Posterior vena cava (tissue), 2 donors: ENCODE measurements at regions of chr15 and their contacts with region 1.

Region 1: DNA sequence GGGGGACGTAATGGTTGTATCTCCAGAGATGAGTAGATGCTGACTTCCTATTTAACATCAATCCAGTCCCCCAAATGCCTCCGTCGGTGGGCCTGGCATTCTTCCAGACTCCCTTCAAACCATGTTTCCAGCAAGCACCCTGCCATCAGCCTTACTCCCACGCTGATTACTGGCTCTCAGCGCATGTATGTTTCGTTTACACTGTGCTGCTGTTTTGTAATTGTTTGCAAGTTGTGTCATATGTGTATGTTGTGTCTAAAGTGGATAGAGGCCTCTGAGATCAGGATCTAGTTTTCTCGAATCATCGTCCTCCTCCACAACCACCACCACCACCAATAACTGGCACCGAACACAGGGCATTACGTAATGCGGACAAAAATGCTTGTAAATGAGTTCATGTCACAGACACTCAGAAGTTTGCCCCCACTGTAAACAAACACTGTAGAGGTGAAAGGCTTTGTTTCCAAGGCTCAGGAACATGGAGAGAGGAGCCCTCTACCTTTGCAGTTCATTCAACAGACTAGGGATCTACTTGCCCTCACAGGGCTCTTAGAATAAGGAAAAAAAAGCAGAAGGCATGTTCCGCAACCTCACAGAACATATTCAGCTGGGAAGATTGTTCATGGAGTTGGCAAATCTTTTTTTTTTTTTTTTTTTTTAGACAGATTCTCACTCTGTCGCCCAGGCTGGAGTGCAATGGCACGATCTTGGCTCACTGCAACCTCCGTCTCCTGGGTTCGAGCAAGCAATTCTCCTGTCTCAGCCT is 46.1 kb upstream of the SEMA4B start:
- DNase-seq: no peak

Region 2: GRCh38 chr15:89680282-89680873 is 474.7 kb before region 1 on chr15:
- intact Hi-C with region 1: no loop called
- DNase-seq: no peak

Region 3: DNA sequence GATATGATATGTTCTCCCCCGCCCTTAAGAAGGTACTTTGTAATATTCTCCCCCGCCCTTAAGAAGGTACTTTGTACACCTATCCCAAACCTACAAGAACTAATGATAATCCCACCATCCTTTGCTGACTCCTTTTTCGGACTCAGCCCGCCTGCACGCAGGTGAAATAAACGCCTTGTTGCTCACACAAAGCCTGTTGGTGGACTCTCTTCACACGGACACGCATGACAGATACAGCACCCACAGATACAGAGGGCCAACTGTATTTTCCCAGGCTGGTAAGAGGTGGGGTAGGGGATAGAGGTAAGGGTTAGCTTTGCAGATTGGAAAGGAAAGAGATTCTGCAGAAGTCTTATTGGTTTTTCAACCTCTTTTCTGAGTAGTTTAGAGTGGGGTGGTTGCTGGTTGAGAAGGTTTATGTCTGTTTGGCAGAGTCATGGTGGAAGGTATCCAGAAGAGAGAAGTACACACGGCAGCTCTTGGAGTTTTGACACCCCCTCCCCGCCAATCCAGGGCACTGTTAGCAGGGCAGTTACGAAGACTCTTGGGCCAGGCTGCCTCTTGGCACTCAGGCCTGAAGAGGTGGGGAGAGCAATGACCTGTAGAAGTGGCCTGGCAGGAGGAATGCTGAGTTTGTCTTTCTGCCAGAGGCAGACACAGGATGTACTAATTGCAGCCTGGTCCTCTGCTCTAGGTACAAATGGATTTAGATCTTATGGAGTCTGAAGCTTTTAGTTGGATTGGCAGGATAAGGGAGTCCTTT is 16.8 kb before region 1 on chr15:
- intact Hi-C with region 1: loop called in 1 of 2 experiments (anchors 1 kb)
- DNase-seq: no peak

Region 4: DNA sequence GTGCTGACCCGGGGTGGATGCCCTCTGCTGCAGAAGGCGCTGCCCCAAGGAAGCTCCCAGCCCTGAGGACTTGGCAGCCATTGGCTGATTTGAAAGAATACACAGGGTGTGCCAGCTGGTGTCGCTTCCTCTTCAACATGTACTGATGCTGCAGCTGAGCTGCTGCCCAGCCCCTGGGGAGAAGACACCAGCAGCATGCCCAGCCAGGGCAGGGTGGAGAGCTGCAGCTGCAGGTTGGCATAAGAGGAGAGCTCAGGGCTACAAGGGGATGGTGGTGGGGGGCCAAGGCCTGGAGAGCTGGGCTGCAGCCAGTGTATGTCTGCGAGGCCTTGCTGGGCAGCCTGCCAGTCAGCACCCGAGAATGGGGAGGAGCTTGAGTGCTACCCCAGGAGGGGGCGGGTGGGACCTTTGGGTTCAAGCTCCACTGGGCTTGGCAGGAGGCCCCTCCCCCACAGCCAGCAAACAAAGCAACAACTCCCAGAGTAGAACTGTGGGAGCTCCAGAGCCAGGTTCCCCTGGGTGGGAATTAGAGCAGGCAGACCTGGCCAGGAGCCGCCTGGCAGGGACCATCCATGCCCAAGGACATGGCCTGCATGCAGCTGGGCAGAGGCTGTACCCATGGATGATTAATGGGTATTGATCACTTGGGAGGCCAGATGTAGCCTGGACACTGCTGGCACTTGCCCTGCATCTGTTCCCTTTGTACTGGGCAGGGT is 36.9 kb after region 1 on chr15:
- intact Hi-C with region 1: no loop called
- DNase-seq: peak; percentile 88